Heart right ventricle (tissue), 16 donors: ENCODE measurements at regions of chr14 and their contacts with region 1.

Region 1: DNA sequence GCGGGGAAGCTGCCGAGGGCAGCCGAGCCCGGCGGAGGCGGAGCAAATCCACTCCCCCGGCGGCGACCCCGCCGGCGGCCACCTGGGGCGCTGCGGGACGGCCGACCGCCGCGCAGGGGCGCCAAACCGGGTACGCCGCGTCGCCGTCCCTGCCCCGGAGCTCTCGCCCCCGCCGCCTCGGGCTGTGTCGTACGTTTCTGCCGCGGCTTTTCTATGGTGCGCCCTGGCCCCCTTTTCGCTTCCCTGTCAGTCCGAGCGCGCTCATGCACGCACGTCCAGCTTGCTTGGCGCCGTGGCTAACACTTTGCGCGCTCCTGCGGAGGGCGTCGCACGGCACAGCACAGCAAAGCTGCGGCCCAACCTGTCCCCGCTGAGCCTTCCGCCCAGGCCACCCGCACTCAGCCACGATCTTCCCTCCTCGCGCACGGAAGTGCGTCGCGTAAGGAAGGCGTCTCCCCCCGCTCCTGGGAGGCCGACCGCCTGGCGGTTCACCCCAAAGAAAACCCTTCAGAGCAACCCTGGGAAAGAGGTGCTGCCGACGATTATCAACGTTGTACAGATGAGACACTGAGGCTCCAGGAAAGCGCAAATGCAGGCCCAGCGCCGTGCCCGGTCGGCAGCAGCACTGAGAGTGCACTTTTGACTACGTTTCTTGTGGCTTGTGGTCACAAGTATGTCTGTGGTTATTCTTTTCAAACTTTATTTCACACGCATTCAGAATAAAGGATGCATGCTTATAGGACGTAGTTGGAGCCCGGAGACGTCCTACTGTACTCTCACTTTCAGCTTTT is at the start of gene HECTD1:
- DNase-seq: peak; percentile 79 to 90
- ATAC-seq: peak; percentile 92 to 97 (median 94)
- H3K4me3 ChIP-seq: peak within 1 kb of the TSS; percentile 68 to 99 (median 92)
- H3K27ac ChIP-seq: peak within 1 kb of the TSS; percentile 93 to 100 (median 99)
- H3K4me1 ChIP-seq: peaks cover 4 to 34% (median 29%) of the 10 kb centered on the region in 9 donors
- H3K27me3 ChIP-seq: no peaks in the 10 kb centered on the region
- CTCF ChIP-seq: peak; percentile 61 to 97 (median 86)
- total RNA-seq, gene HECTD1: 126 to 189 (median 159) TPM

Region 2: GRCh38 chr14:30935445-30935844 is 272.5 kb before region 1 on chr14:
- intact Hi-C with region 1: no loop called
- DNase-seq: no peak
- ATAC-seq: no peak
- H3K4me3 ChIP-seq: no peak overlapping the region
- H3K27ac ChIP-seq: no peak overlapping the region
- H3K4me1 ChIP-seq: peaks cover 0 to 25% (median 3%) of the 10 kb centered on the region in 9 donors
- H3K27me3 ChIP-seq: no peaks in the 10 kb centered on the region
- CTCF ChIP-seq: no peak

Region 3: GRCh38 chr14:30988509-30988908 is 219.4 kb before region 1 on chr14:
- intact Hi-C with region 1: no loop called
- DNase-seq: no peak
- ATAC-seq: no peak
- H3K4me3 ChIP-seq: no peak overlapping the region
- H3K27ac ChIP-seq: no peak overlapping the region
- H3K4me1 ChIP-seq: peaks cover 0 to 49% (median 22%) of the 10 kb centered on the region in 9 donors
- H3K27me3 ChIP-seq: no peaks in the 10 kb centered on the region
- CTCF ChIP-seq: no peak

Region 4: GRCh38 chr14:31229638-31230229 is 21.8 kb after region 1 on chr14:
- intact Hi-C with region 1: loop called in 1 of 10 experiments (anchors 1 kb)
- DNase-seq: peak; percentile 35 to 46
- ATAC-seq: peak; percentile 94 to 100 (median 96)
- H3K4me3 ChIP-seq: peak overlapping the region in 6 of 10 donors; percentile 20 to 41 (median 32)
- H3K27ac ChIP-seq: peak overlapping the region; percentile 18 to 77 (median 56)
- H3K4me1 ChIP-seq: peaks cover 0 to 12% (median 8%) of the 10 kb centered on the region in 9 donors
- H3K27me3 ChIP-seq: no peaks in the 10 kb centered on the region
- CTCF ChIP-seq: no peak

Region 5: GRCh38 chr14:31297701-31298344 is 89.9 kb after region 1 on chr14:
- intact Hi-C with region 1: loop called in 1 of 10 experiments (anchors 10 kb)
- DNase-seq: no peak
- ATAC-seq: no peak
- H3K4me3 ChIP-seq: no peak overlapping the region
- H3K27ac ChIP-seq: no peak overlapping the region
- H3K4me1 ChIP-seq: peaks cover 0 to 5% (median 0%) of the 10 kb centered on the region in 9 donors
- H3K27me3 ChIP-seq: no peaks in the 10 kb centered on the region
- CTCF ChIP-seq: no peak